Mammary epithelial cell (primary cell): ENCODE measurements at regions of chr2 and their contacts with region 1.

Region 1: GRCh38 chr2:237235383-237236095 is 149.8 kb downstream of the COPS8 start:
- DNase-seq: peak; percentile 72
- H3K4me3 ChIP-seq: no peak overlapping the region
- H3K27ac ChIP-seq: no peak overlapping the region
- H3K4me1 ChIP-seq: peaks cover 9% of the 10 kb centered on the region
- H3K27me3 ChIP-seq: peaks cover 18% of the 10 kb centered on the region
- CTCF ChIP-seq: no peak

Region 2: DNA sequence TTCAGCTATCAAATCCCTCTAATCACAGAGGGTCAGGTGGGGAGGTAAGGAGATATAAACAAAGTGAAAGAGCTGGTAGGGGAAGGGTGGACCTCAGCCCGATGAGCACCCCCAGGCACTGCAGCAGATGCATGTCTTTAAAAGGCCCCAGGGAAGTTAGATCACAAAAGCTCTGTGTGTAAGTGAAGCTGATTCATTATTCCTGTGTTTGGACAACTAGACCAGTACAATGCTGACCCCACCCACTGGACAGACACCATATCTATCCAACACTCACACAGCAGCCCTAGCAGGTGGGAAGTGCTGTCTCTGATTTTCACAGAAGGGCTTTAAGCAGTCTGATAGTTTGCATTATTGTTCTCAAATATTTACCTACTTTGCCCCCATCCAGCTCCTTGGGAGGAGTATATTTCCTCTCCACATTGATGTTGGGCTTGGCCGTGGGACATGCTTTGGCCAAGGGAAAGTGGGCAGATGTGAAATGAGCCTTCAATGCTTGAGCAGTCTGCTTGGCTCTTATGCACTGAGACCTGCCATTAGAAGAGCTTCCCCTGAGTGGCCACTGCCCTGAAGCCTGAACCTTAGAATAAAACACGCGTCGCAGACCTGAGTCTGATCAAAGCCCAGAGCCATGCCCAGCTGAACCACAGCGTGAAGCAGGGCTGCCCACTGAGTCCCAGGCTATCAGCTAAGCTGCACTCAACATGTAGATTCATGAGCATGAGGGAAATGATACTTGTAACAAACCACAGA is 38.5 kb before region 1 on chr2:
- CTCF ChIA-PET with region 1: no interaction called
- dilution Hi-C with region 1: loop called (anchors 5 kb)
- in situ Hi-C with region 1: no loop called
- intact Hi-C with region 1: no loop called
- DNase-seq: peak; percentile 77
- H3K4me3 ChIP-seq: no peak overlapping the region
- H3K27ac ChIP-seq: no peak overlapping the region
- H3K4me1 ChIP-seq: peaks cover 20% of the 10 kb centered on the region
- H3K27me3 ChIP-seq: no peaks in the 10 kb centered on the region
- CTCF ChIP-seq: no peak

Region 3: GRCh38 chr2:237213315-237214022 is 22.1 kb before region 1 on chr2:
- CTCF ChIA-PET with region 1: no interaction called
- dilution Hi-C with region 1: no loop called
- in situ Hi-C with region 1: no loop called
- intact Hi-C with region 1: no loop called
- DNase-seq: peak; percentile 31
- H3K4me3 ChIP-seq: no peak overlapping the region
- H3K27ac ChIP-seq: no peak overlapping the region
- H3K4me1 ChIP-seq: no peaks in the 10 kb centered on the region
- H3K27me3 ChIP-seq: peaks cover 5% of the 10 kb centered on the region
- CTCF ChIP-seq: no peak

Region 4: DNA sequence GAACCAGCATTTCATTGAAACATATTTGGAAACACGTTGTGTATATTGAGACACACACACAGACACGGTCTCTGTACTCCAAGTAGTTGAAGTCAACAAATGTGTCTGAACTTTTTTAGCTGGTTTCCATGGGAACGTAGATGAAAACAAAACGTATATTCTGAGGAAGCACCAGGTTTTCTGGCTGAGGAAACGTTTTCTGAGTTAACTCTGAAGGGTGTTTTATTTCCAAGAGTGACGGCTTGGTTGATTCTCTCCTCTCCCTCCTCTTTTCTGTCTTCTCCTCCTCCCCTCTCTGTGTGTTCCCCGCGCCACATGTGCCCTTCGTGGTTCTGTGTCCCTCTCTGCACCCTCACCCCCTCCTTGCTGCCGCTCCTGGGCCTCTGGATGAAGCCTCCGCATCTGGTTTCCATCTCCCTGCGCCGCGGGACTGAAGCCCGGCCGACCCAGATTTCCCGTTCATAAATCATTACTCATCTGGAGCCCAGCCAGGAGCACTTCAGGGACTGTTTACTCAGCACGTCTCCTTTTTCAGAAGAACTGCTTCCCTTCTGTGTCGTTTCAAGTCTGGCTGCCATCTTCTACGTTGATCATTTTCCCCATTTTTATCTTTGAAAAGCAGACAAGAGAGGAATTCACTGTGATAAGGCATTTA is 55.7 kb after region 1 on chr2:
- CTCF ChIA-PET with region 1: no interaction called
- dilution Hi-C with region 1: loop called (anchors 10 kb)
- in situ Hi-C with region 1: no loop called
- intact Hi-C with region 1: no loop called
- DNase-seq: peak; percentile 88
- H3K4me3 ChIP-seq: peak overlapping the region in 1 of 3 experiments; percentile 6
- H3K27ac ChIP-seq: peak overlapping the region; percentile 81
- H3K4me1 ChIP-seq: peaks cover 28% of the 10 kb centered on the region
- H3K27me3 ChIP-seq: no peaks in the 10 kb centered on the region
- CTCF ChIP-seq: no peak